AG04450 (cell line): ENCODE measurements at regions of chr17 and their contacts with region 1.

Region 1: DNA sequence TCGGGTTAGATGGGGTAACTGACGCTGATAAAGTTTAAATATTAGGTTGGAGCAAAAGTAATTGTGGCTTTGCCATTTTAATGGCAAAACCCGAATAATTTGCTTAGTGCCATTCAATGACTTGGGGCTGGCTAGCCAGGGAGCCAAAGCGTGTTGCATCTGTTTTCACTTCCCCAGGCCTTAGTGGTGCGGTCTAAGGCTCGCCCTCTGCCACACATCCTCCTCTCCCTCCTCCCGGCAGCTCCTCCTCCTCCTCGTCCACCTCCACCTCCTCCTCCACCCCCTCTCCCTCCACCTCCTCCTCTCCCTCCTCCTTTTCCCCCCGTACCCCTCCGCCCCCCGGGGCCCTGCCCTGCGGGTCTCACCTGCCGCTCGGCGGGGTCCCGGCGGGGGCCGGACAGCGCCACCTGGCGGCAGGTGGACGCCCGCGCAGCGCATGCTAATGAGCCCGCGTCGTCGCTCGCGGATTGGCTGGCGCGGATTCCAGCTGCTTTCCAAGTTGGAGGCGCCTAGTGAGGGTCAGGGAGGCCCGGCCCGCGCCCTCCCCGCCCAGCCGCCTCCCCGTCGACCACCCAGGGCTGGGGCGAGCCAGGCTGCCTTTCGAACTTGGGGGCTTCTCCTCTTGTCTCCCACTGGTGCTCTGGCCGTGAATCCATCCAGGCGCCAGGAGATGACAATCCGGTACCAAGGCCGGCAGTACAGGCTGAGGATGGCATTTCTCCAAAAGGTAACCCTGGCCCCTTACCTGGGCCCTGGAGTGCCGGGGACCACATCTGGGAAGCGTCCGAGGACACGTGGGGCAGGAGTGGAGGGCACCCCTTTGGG is 36.6 kb upstream of the RGS9 start:
- DNase-seq: no peak
- H3K4me3 ChIP-seq: peak overlapping the region; percentile 52
- H3K27ac ChIP-seq: no peak overlapping the region
- H3K27me3 ChIP-seq: no peaks in the 10 kb centered on the region
- CTCF ChIP-seq: peak; percentile 74

Region 2: GRCh38 chr17:64088087-64088486 is 1012.4 kb before region 1 on chr17:
- CTCF ChIA-PET with region 1: interaction called, 14 read pairs
- POLR2A ChIA-PET with region 1: no interaction called
- DNase-seq: no peak
- H3K4me3 ChIP-seq: no peak overlapping the region
- H3K27ac ChIP-seq: no peak overlapping the region
- H3K27me3 ChIP-seq: no peaks in the 10 kb centered on the region
- CTCF ChIP-seq: no peak

Region 3: DNA sequence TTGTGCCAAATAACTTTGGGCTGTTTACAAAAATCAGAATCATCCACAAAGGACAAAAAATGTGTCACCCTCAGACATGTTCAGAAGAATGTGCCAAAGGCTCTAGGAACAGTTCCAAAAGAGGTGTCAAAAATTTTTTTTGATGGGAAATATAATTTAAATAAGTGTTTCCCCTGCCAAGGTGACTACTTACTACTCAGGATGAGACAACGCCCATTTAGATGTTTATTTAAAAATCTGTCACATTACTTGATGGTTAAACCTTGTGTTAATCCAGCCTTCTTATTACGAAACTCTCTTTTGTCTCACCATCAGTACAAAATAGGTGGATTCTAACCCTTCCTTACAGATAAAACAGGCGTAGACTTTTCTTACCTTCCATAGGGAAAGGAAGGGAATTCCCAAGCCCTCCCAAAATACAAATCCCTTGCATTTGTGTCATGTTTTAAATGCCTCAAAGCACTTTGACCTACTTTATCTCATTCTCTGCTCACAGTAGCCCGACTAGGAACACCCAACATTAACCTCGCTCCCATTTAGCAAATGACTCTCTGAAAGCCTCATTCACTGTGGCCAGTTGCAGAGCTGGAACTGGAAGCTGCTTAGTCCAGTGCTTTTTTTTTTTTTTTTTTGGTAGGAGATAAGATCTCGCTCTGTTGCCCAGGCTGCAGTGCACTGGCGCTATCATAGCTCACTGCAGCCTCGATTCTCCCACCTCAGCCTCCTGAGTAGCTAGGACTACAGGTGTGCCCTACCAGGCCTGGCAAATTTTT is 38.2 kb before region 1 on chr17:
- CTCF ChIA-PET with region 1: interaction called, 18 read pairs
- POLR2A ChIA-PET with region 1: no interaction called
- DNase-seq: no peak
- H3K4me3 ChIP-seq: no peak overlapping the region
- H3K27ac ChIP-seq: no peak overlapping the region
- H3K27me3 ChIP-seq: no peaks in the 10 kb centered on the region
- CTCF ChIP-seq: no peak

Region 4: DNA sequence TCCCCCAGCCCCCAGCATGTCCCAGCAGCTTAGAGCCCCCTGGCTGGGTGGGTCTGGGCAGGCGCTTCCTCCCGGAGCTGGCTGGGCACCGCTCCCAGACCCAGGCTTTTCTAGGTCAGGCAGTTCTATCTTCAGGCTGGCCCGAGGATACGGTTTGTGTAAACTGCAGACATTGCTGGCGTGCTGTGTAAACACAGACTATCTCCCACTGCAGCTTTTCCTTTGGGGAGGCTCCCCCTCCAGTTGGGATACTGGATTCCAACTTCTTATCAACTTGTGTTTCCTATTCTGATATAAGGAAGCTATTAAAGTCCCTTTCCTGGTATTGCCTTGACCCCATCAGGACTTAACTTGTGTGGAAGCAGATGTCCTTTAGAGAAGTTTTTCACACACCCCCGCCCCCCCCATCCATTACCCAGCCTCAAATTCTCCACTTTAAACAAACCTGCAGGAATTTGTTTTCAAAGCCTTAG is 25.7 kb before region 1 on chr17:
- CTCF ChIA-PET with region 1: interaction called, 14 read pairs
- POLR2A ChIA-PET with region 1: interaction called, 10 read pairs
- DNase-seq: peak; percentile 33
- H3K4me3 ChIP-seq: no peak overlapping the region
- H3K27ac ChIP-seq: no peak overlapping the region
- H3K27me3 ChIP-seq: no peaks in the 10 kb centered on the region
- CTCF ChIP-seq: no peak

Region 5: DNA sequence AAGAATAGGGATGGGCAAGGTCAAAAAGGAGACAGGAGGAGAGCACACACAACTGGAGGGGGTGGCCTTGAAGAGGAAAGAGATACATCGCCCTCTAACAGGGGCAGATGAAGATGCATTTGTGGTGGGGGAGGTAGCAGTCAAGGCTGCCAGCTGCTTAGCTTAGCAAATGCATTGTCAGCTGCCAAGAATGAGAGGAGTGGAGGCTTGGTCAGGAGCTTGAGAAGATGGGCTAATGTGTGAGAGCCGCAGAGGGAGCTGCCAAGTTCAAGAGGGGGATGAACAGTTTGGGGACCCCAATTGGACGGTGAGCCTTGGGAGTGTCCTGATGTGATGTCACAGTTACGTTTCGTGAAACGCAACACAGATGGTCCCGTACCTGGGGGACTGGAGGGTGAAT is 15.1 kb before region 1 on chr17:
- CTCF ChIA-PET with region 1: interaction called, 63 read pairs
- POLR2A ChIA-PET with region 1: no interaction called
- DNase-seq: no peak
- H3K4me3 ChIP-seq: no peak overlapping the region
- H3K27ac ChIP-seq: no peak overlapping the region
- H3K27me3 ChIP-seq: peaks cover 29% of the 10 kb centered on the region
- CTCF ChIP-seq: no peak

Region 6: GRCh38 chr17:65130832-65131231 is 30.3 kb after region 1 on chr17:
- CTCF ChIA-PET with region 1: interaction called, 12 read pairs
- POLR2A ChIA-PET with region 1: no interaction called
- DNase-seq: no peak
- H3K4me3 ChIP-seq: no peak overlapping the region
- H3K27ac ChIP-seq: no peak overlapping the region
- H3K27me3 ChIP-seq: no peaks in the 10 kb centered on the region
- CTCF ChIP-seq: no peak